CD4-positive, alpha-beta memory T cell (primary cell): ENCODE measurements at regions of chrX and their contacts with region 1.

Region 1: GRCh38 chrX:45849253-45849862 is 648.7 kb upstream of the DIPK2B start:
- DNase-seq: peak; percentile 34 to 52 (median 38)
- H3K4me3 ChIP-seq: peak overlapping the region; percentile 49 to 80
- H3K4me3 Mint-ChIP-seq: peak overlapping the region; percentile 91 to 97 (median 94)
- H3K27ac ChIP-seq: no peak overlapping the region
- H3K27ac Mint-ChIP-seq: peak overlapping the region; percentile 48 to 81 (median 66)
- H3K4me1 ChIP-seq: peaks cover 8% of the 10 kb centered on the region
- H3K4me1 Mint-ChIP-seq: peaks cover 5 to 28% (median 15%) of the 10 kb centered on the region in 4 donors
- H3K27me3 ChIP-seq: no peaks in the 10 kb centered on the region
- H3K27me3 Mint-ChIP-seq: no peaks in the 10 kb centered on the region

Region 2: GRCh38 chrX:45758319-45758718 is 91.0 kb before region 1 on chrX:
- CTCF ChIA-PET with region 1: no interaction called
- POLR2A ChIA-PET with region 1: interaction called, 4 read pairs
- intact Hi-C with region 1: loop called (anchors 5 kb)
- DNase-seq: peak in 4 of 5 donors; percentile 36 to 77 (median 48)
- H3K4me3 ChIP-seq: peak overlapping the region in 1 of 2 donors; percentile 33
- H3K4me3 Mint-ChIP-seq: peak overlapping the region; percentile 73 to 91 (median 86)
- H3K27ac ChIP-seq: peak overlapping the region; percentile 56
- H3K27ac Mint-ChIP-seq: peak overlapping the region in 6 of 7 donors; percentile 90 to 96 (median 94)
- H3K4me1 ChIP-seq: peaks cover 91% of the 10 kb centered on the region
- H3K4me1 Mint-ChIP-seq: peaks cover 45 to 76% (median 60%) of the 10 kb centered on the region in 4 donors
- H3K27me3 ChIP-seq: no peaks in the 10 kb centered on the region
- H3K27me3 Mint-ChIP-seq: no peaks in the 10 kb centered on the region

Region 3: DNA sequence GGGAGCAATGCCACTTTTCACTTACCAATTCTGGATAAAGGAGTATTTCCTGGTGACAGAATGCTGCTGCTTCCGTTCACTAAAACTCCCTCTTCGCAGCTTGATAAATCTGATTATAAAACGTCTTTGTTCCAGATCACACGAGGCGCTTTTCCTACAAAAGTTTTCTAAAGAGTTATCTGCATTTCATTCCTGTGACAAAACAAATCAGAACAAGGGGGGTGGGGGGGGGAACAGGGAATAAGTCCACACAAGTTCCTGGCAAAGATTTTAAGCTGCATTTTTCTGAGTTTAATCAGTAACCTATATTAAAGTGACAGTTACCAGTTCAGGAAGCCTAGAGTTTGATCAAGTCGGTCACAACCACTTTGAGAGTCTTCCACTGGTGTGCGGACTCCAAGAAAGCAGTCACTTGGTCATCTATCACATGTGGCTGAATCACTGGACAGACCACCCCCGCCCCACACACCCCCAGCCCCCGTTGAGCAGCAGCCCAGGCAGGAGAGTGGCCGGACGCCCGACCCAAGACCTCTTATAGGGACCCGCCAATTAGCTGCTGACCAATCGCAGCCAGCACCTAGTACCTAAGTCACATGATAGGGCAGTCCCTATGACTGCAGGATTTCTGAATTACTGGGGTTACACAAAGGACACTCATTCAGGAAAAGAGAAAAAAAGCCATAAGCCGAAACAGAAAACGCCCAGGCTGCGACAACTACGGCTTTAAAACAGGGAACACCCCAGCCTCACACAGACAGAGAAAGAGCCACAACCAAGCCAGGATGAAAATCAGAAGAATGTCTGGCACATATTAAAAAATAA is 79.4 kb before region 1 on chrX:
- CTCF ChIA-PET with region 1: no interaction called
- POLR2A ChIA-PET with region 1: interaction called, 12 read pairs
- intact Hi-C with region 1: no loop called
- DNase-seq: peak in 3 of 5 donors; percentile 20 to 46 (median 32)
- H3K4me3 ChIP-seq: peak overlapping the region; percentile 55 to 68
- H3K4me3 Mint-ChIP-seq: peak overlapping the region; percentile 85 to 95 (median 90)
- H3K27ac ChIP-seq: peak overlapping the region; percentile 74
- H3K27ac Mint-ChIP-seq: peak overlapping the region; percentile 89 to 95 (median 94)
- H3K4me1 ChIP-seq: peaks cover 63% of the 10 kb centered on the region
- H3K4me1 Mint-ChIP-seq: peaks cover 29 to 80% (median 49%) of the 10 kb centered on the region in 4 donors
- H3K27me3 ChIP-seq: no peaks in the 10 kb centered on the region
- H3K27me3 Mint-ChIP-seq: no peaks in the 10 kb centered on the region

Region 4: DNA sequence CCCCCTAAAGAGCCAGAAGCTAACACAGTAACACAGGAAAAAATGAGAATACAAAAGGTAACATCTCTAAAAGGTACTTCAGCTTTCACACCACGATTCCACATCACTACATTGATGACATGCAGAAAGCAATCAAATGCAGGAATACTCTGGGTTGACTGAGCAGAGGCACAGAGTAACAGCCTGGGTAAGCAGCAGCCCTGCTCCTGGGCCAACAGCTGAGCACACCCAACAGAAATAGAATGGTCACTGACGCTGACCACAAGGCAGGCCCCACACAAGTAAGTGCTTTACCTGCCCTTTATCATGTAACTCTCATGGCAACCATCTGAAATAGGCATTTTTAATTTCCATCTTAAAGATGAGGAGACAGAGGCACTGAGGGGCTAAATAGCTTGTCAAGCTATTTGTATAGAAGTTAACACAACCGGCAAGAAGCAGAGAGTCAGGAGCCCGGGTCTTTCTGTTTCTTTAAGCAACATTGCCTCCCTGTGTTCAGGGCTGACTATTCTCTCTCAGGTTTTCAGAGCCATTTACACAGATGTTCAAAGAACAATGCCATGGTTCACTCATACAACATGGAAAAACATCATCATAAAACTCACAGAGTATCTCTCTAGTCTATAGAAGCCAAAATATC is 527.0 kb after region 1 on chrX:
- CTCF ChIA-PET with region 1: interaction called, 6 read pairs
- POLR2A ChIA-PET with region 1: no interaction called
- intact Hi-C with region 1: loop called (anchors 2 kb)
- DNase-seq: peak in 4 of 5 donors; percentile 17 to 38 (median 32)
- H3K4me3 ChIP-seq: no peak overlapping the region
- H3K4me3 Mint-ChIP-seq: no peak overlapping the region
- H3K27ac ChIP-seq: no peak overlapping the region
- H3K27ac Mint-ChIP-seq: no peak overlapping the region
- H3K4me1 ChIP-seq: no peaks in the 10 kb centered on the region
- H3K4me1 Mint-ChIP-seq: no peaks in the 10 kb centered on the region
- H3K27me3 ChIP-seq: no peaks in the 10 kb centered on the region
- H3K27me3 Mint-ChIP-seq: no peaks in the 10 kb centered on the region